Gastrocnemius medialis (tissue), 4 donors: ENCODE measurements at regions of chr16 and their contacts with region 1.

Region 1: GRCh38 chr16:7025616-7026190 is 306.9 kb upstream of the RBFOX1 start:
- DNase-seq: peak; percentile 5 to 44
- ATAC-seq: peak; percentile 50 to 71
- H3K4me3 ChIP-seq: no peak overlapping the region
- H3K27ac ChIP-seq: no peak overlapping the region
- H3K4me1 ChIP-seq: no peaks in the 10 kb centered on the region
- H3K27me3 ChIP-seq: no peaks in the 10 kb centered on the region
- CTCF ChIP-seq: peak in 4 of 5 experiments; percentile 49 to 64 (median 56)
- POLR2A ChIP-seq: no peak

Region 2: GRCh38 chr16:6836771-6837170 is 188.9 kb before region 1 on chr16:
- in situ Hi-C with region 1: no loop called
- intact Hi-C with region 1: no loop called
- DNase-seq: no peak
- ATAC-seq: no peak
- H3K4me3 ChIP-seq: no peak overlapping the region
- H3K27ac ChIP-seq: no peak overlapping the region
- H3K4me1 ChIP-seq: no peaks in the 10 kb centered on the region
- H3K27me3 ChIP-seq: no peaks in the 10 kb centered on the region
- CTCF ChIP-seq: no peak
- POLR2A ChIP-seq: no peak

Region 3: DNA sequence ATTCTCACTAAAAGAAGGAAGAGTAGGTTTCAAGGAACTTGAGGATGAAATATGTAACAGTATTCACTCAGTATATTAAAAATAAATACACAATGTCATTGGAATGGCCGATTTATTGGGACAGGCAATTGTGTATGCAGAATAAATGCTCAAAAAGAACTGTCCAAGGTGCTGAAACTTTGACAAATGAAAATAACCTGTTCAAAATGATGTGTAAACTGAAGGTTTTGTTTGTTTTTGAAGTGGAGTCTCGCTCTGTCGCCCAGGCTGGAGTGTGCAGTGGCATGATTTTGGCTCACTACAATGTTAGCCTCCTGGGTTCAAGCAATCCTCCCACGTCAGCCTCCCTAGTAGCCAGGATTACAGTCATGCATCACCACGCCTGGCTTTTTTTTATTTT is 11.7 kb before region 1 on chr16:
- in situ Hi-C with region 1: no loop called
- intact Hi-C with region 1: no loop called
- DNase-seq: no peak
- ATAC-seq: no peak
- H3K4me3 ChIP-seq: no peak overlapping the region
- H3K27ac ChIP-seq: no peak overlapping the region
- H3K4me1 ChIP-seq: no peaks in the 10 kb centered on the region
- H3K27me3 ChIP-seq: no peaks in the 10 kb centered on the region
- CTCF ChIP-seq: no peak
- POLR2A ChIP-seq: no peak

Region 4: GRCh38 chr16:7037495-7037894 is 11.8 kb after region 1 on chr16:
- in situ Hi-C with region 1: no loop called
- intact Hi-C with region 1: loop called (anchors 1 kb)
- DNase-seq: no peak
- ATAC-seq: no peak
- H3K4me3 ChIP-seq: no peak overlapping the region
- H3K27ac ChIP-seq: no peak overlapping the region
- H3K4me1 ChIP-seq: no peaks in the 10 kb centered on the region
- H3K27me3 ChIP-seq: no peaks in the 10 kb centered on the region
- CTCF ChIP-seq: no peak
- POLR2A ChIP-seq: no peak